Activated T-helper 1 cell treated with anti-CD3 and anti-CD28 coated beads, Interleukin-12 subunit alpha, Interleukin-12 subunit beta, Interleukin-2, Interleukin-4 antibody, amounts not matched to agents 30 ng/mL and 10 ng/mL and 1 ng/mL, durations not matched to agents 14 hours and 24 hours and 36 hours (primary cell): ENCODE measurements at regions of chr2 and their contacts with region 1.

Region 1: GRCh38 chr2:179106676-179107428 is 56.9 kb upstream of the CCDC141 start:
- DNase-seq: no peak
- H3K4me3 Mint-ChIP-seq: peak overlapping the region; percentile 32
- H3K27ac Mint-ChIP-seq: peak overlapping the region; percentile 29
- H3K4me1 Mint-ChIP-seq: peaks cover 46% of the 10 kb centered on the region
- H3K27me3 Mint-ChIP-seq: no peaks in the 10 kb centered on the region

Region 2: DNA sequence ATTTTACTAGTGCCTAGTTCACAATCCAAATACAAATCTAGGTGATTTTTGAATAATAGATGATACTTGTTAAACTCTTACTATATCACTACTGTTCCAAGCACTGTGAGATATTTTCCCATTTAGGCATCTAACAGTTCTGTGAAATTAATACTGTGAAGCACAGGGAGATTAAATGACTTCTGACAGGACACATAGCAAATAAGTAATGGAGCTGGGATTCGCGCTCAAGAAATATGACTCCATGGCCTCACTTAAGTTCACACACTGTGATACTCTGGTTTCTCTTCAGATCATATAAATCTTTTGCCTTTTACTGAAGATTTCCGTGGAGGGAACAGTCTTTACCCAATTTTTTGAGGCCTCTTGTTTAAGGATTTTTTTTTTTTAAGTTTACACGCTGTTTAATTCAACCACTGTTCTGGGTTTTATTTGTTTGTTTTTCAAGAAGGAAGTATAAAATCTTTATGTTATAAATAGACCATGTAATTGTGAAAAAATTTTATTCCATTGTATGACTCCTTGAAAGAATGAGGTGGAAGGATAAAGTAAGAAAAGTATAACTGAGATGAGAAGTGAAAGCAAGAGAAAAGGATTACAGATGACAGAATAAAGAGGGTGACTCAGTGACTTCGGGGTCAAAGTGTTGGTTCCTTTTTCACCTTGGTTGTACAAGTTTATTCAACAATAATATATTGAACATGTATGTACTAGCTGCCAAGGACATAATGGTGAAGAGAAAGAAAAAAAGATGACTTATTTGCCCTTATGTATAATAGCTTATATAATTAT is 964.4 kb before region 1 on chr2:
- intact Hi-C with region 1: no loop called
- DNase-seq: no peak
- H3K4me3 Mint-ChIP-seq: no peak overlapping the region
- H3K27ac Mint-ChIP-seq: no peak overlapping the region
- H3K4me1 Mint-ChIP-seq: peaks cover 6% of the 10 kb centered on the region
- H3K27me3 Mint-ChIP-seq: peaks cover 12% of the 10 kb centered on the region

Region 3: DNA sequence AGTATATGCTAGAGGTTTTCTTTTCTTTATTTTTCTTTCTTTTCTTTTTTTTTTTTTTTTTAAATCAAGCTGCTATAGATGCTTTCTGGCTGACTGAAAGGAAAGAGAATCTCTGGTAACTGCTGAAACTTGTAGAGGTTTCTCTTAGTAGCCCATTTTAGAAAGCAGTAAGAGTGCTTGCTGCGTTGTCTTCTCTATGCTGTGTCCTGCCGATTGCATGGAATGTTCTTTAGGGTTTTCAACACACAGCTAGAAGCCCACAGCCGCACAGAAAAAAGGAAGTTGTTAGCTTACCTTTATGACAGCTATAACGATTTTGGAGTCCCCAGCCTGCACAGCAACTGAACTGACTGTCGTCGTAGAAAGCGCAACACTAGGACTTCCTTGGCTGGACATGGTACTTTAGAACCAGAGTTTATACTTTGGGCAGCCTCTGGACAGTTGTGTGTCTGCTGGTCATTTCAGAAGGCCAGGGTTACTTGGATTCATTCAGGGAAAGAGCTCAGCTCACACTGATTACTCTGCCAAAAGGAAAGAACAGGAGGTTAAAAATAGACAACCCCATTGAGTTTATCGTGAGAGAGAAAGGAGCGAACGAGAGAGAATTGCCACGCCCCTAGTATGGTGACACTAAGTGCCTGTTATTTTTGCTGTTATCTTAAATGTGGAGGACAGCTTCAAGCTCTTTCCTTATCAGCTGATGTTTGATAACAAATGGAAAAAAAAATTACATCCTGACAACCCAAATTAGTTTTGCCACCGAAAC is 57.1 kb before region 1 on chr2 and contains the start of gene CCDC141:
- intact Hi-C with region 1: loop called (anchors 5 kb)
- DNase-seq: peak; percentile 8
- H3K4me3 Mint-ChIP-seq: peak within 1 kb of the TSS; percentile 83
- H3K27ac Mint-ChIP-seq: peak within 1 kb of the TSS; percentile 44
- H3K4me1 Mint-ChIP-seq: peaks cover 41% of the 10 kb centered on the region
- H3K27me3 Mint-ChIP-seq: no peaks in the 10 kb centered on the region
- total RNA-seq, gene CCDC141: 0.78 and 1.2 TPM in 2 replicates

Region 4: GRCh38 chr2:179275253-179276012 is 168.6 kb after region 1 on chr2:
- intact Hi-C with region 1: no loop called
- DNase-seq: no peak
- H3K4me3 Mint-ChIP-seq: no peak overlapping the region
- H3K27ac Mint-ChIP-seq: no peak overlapping the region
- H3K4me1 Mint-ChIP-seq: no peaks in the 10 kb centered on the region
- H3K27me3 Mint-ChIP-seq: peaks cover 11% of the 10 kb centered on the region